ENCODE measurements at regions of chr5 and their contacts with region 1.

Region 1: GRCh38 chr5:63401436-63402046 is 560.7 kb downstream of the HTR1A start:
- DNase-seq: no peak
- H3K4me3 Mint-ChIP-seq: no peak overlapping the region
- H3K27ac Mint-ChIP-seq: no peak overlapping the region
- H3K4me1 Mint-ChIP-seq: no peaks in the 10 kb centered on the region
- H3K27me3 Mint-ChIP-seq: no peaks in the 10 kb centered on the region

Region 2: DNA sequence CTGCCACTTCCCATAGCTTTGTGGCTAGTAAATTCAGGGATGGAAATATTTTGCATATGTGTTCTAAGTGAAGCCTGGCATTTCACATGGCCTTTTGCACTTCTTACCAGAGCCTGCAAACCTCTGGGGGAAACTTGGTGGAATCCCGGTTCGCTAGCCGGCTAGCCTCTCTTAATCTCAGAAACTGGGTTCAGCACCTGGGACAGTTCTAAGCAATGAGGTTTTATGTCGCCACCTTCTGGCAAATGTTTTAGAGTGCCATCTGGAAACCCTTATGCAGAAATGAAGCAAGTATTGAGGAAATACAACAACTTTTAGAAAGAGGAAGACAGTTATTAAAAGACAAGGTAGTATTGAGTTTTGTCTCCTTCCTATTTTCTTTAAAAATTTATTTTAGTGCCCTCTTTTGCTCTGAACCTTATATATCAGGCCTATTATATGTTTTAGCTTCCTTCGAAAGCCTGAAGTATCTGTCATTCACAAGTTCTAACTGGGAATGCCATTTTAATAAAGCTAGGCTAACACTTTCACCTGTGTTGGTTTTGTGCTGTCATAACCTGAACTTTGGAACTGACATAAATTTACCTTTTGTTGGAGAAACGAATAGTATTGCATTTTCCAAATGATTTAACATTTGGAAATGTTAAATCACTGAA is 561.7 kb after region 1 on chr5:
- intact Hi-C with region 1: loop called (anchors 1 kb)
- DNase-seq: peak; percentile 2
- H3K4me3 Mint-ChIP-seq: no peak overlapping the region
- H3K27ac Mint-ChIP-seq: no peak overlapping the region
- H3K4me1 Mint-ChIP-seq: no peaks in the 10 kb centered on the region
- H3K27me3 Mint-ChIP-seq: peaks cover 15% of the 10 kb centered on the region

Region 3: DNA sequence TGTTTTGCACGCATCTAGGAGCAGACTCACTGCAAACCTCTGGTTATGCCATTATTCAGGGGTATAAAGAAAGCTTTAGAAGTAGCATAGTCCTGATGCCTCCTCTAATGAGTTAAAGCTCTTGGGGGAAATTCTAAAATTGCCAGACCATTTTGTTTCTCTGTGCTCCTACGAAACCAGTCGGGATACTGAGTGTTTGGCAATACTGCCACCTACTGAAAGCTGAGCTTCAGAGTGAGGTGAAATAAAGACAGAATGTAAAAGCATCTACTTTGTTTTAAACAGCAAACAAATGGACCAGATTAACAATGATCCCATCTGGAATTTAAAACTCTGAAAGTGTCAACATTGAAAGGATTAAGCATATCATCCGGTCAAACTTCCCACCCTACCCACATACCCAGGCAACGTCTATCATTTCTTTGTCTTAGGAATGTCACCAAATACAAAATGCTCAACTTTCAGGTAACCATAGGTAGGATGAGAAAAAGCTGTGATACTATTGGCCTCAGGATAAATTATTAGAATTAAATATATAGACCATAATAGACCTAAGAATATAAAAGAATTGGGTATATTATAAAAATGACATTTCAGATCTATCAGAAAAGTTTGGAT is 1210.9 kb after region 1 on chr5:
- intact Hi-C with region 1: loop called (anchors 5 kb)
- DNase-seq: no peak
- H3K4me3 Mint-ChIP-seq: no peak overlapping the region
- H3K27ac Mint-ChIP-seq: no peak overlapping the region
- H3K4me1 Mint-ChIP-seq: no peaks in the 10 kb centered on the region
- H3K27me3 Mint-ChIP-seq: peaks cover 6% of the 10 kb centered on the region